ENCODE measurements at regions of chr3 and their contacts with region 1.

Region 1: GRCh38 chr3:156674046-156674910 is at the start of gene TIPARP:
- DNase-seq: peak; percentile 100
- ATAC-seq: peak; percentile 80
- H3K4me3 Mint-ChIP-seq: peak within 1 kb of the TSS; percentile 92
- H3K27ac Mint-ChIP-seq: peak within 1 kb of the TSS; percentile 97
- H3K4me1 Mint-ChIP-seq: peaks cover 42% of the 10 kb centered on the region
- H3K27me3 Mint-ChIP-seq: no peaks in the 10 kb centered on the region
- CTCF ChIP-seq: no peak
- total RNA-seq, gene TIPARP: 31.3 and 32.3 TPM in 2 replicates

Region 2: DNA sequence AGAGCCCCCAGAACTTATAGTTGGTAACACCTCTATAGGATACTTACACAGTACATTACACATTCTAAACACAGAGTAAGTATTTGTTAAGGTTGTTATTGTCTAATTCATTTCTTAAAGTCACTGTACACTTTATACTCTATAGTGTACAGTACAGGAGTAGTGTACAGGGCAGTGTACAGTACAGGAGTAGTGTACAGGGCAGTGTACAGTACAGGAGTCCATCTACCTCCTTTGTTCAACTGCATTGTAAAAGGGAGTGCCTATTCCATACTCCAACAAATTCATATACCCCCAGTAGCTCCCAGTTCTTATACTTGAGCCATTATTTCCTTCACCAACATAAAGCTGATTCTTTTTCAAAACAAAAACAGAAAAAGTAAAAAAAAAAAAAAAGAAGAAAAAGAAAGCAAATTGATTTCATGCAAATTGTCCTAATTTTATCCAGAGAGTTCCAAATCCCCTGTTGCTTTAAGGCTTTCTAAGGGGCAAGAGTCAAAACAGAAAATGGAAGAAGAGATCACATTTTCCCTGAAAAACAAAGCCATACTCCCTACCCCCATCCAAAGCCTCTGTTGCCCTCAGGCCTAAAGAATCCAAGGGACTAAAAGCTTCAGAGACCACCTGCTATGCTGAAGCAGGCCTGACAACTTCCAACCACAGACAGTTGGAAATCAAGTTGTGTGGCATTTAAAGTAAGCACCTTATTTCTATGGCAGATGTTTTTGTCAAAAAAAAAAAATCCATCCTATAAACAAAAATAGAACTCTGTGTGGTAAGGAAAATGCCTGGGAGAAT is 1055.0 kb before region 1 on chr3:
- CTCF ChIA-PET with region 1: no interaction called
- POLR2A ChIA-PET with region 1: no interaction called
- intact Hi-C with region 1: no loop called
- DNase-seq: no peak
- ATAC-seq: no peak
- H3K4me3 Mint-ChIP-seq: no peak overlapping the region
- H3K27ac Mint-ChIP-seq: no peak overlapping the region
- H3K4me1 Mint-ChIP-seq: no peaks in the 10 kb centered on the region
- H3K27me3 Mint-ChIP-seq: no peaks in the 10 kb centered on the region
- CTCF ChIP-seq: no peak

Region 3: GRCh38 chr3:155854141-155854940 is 819.9 kb before region 1 on chr3 and contains the start of gene SLC33A1:
- CTCF ChIA-PET with region 1: no interaction called
- POLR2A ChIA-PET with region 1: no interaction called
- intact Hi-C with region 1: loop called (anchors 2 kb)
- DNase-seq: peak; percentile 97
- ATAC-seq: peak; percentile 91
- H3K4me3 Mint-ChIP-seq: peak within 1 kb of the TSS; percentile 98
- H3K27ac Mint-ChIP-seq: peak within 1 kb of the TSS; percentile 98
- H3K4me1 Mint-ChIP-seq: peaks cover 41% of the 10 kb centered on the region
- H3K27me3 Mint-ChIP-seq: no peaks in the 10 kb centered on the region
- CTCF ChIP-seq: no peak
- total RNA-seq, gene SLC33A1: 19.8 and 23.3 TPM in 2 replicates

Region 4: DNA sequence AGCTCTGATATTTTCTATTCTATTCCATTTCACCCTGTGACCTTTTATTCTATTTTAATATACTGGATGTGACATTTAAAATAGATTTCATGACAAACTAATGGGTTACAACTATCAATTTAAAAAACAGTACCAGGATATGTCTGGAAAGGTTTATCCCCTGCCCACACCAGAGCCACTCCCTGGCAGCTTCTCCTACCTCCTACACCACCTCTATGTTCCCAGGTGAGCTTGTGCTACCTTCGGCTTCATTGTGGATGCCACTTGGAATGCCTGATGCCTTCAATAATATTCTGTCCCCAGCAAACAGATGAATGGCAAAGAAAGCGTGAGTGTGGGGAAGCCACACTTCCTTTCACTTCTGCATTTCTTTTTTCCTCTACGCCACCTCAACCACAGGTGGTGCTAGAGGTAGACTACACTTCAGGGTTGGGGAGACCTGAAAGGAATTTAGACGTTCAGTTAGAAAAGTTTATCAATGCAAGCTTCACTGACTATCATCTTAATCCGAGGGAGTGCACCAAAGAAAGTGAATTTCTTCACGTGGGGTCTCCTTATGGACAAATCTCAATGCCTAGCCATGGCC is 332.4 kb before region 1 on chr3:
- CTCF ChIA-PET with region 1: no interaction called
- POLR2A ChIA-PET with region 1: no interaction called
- intact Hi-C with region 1: loop called (anchors 10 kb)
- DNase-seq: no peak
- ATAC-seq: peak; percentile 94
- H3K4me3 Mint-ChIP-seq: no peak overlapping the region
- H3K27ac Mint-ChIP-seq: no peak overlapping the region
- H3K4me1 Mint-ChIP-seq: peaks cover 6% of the 10 kb centered on the region
- H3K27me3 Mint-ChIP-seq: peaks cover 32% of the 10 kb centered on the region
- CTCF ChIP-seq: no peak

Region 5: GRCh38 chr3:156649681-156650080 is 24.6 kb before region 1 on chr3:
- CTCF ChIA-PET with region 1: no interaction called
- POLR2A ChIA-PET with region 1: no interaction called
- intact Hi-C with region 1: no loop called
- DNase-seq: no peak
- ATAC-seq: no peak
- H3K4me3 Mint-ChIP-seq: no peak overlapping the region
- H3K27ac Mint-ChIP-seq: no peak overlapping the region
- H3K4me1 Mint-ChIP-seq: no peaks in the 10 kb centered on the region
- H3K27me3 Mint-ChIP-seq: peaks cover 3% of the 10 kb centered on the region
- CTCF ChIP-seq: no peak

Region 6: DNA sequence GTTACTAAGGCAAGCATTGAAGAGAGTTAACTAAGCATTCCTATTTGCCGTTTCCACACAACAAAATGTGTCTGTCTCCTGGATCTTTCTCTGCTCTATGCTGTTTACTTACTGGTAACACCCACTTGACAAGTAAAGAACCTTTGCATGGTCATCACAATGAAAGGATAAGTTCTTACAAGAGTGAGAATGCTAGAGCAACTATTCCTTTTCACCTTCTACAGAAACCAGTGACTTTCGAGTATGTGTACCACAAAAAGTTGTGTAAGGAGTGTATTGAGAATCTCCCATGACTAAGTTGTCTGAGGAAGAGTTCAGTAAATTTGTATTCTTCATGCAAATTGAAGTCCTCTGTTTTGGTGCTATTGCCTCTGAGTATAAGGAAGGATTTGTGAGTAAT is 10.9 kb after region 1 on chr3:
- CTCF ChIA-PET with region 1: interaction called, 4 read pairs
- POLR2A ChIA-PET with region 1: interaction called, 12 read pairs
- intact Hi-C with region 1: loop called (anchors 1 kb)
- DNase-seq: no peak
- ATAC-seq: no peak
- H3K4me3 Mint-ChIP-seq: no peak overlapping the region
- H3K27ac Mint-ChIP-seq: no peak overlapping the region
- H3K4me1 Mint-ChIP-seq: peaks cover 55% of the 10 kb centered on the region
- H3K27me3 Mint-ChIP-seq: no peaks in the 10 kb centered on the region
- CTCF ChIP-seq: no peak

Region 7: DNA sequence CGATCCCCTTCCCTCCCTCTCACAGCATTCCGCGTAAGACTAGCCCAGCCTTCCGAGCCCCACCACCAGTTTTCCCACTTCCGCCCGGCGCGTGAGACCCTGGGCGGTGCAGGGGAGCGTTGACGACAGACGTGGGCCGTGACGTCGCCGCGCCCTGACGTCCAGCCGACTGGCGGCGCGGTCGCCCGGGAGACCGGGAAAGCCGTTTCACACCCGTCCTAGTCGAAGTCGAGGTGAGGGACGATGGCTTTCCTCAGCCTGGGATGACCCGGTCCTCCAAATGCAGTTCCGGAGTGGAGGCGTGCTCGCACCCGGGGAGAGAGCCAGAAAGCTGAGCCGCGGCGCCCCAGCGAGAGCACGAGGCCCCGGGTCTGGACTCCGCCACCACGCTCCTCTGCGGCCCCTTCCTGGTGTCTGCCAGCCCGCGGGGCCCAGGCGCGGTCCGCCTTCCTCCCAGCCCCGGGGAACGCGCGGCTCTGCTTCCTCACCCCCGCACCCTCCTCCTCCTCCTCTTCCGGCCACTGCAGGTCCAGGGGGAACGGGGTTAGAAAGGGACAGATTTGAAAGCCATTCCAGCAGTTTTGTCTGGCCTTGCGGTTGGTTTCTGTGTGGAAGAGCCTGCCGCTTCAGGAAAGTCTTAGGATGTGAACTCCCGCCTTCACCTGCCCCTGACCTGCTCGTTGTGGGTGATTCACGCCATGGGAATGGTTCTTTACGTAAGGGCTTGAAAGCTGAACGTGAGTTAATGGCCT is 152.0 kb after region 1 on chr3 and contains the start of gene LEKR1:
- CTCF ChIA-PET with region 1: no interaction called
- POLR2A ChIA-PET with region 1: interaction called, 12 read pairs
- intact Hi-C with region 1: loop called (anchors 1 kb)
- DNase-seq: peak; percentile 74
- ATAC-seq: peak; percentile 73
- H3K4me3 Mint-ChIP-seq: peak within 1 kb of the TSS; percentile 90
- H3K27ac Mint-ChIP-seq: peak within 1 kb of the TSS; percentile 96
- H3K4me1 Mint-ChIP-seq: peaks cover 21% of the 10 kb centered on the region
- H3K27me3 Mint-ChIP-seq: no peaks in the 10 kb centered on the region
- CTCF ChIP-seq: no peak
- total RNA-seq, gene LEKR1: 2.8 and 2.9 TPM in 2 replicates

Region 8: GRCh38 chr3:157081681-157082210 is 407.5 kb after region 1 on chr3:
- CTCF ChIA-PET with region 1: interaction called, 42 read pairs
- POLR2A ChIA-PET with region 1: interaction called, 33 read pairs
- intact Hi-C with region 1: loop called (anchors 1 kb)
- DNase-seq: peak; percentile 86
- ATAC-seq: peak; percentile 99
- H3K4me3 Mint-ChIP-seq: no peak overlapping the region
- H3K27ac Mint-ChIP-seq: peak overlapping the region; percentile 63
- H3K4me1 Mint-ChIP-seq: peaks cover 10% of the 10 kb centered on the region
- H3K27me3 Mint-ChIP-seq: no peaks in the 10 kb centered on the region
- CTCF ChIP-seq: peak; percentile 88

Region 9: DNA sequence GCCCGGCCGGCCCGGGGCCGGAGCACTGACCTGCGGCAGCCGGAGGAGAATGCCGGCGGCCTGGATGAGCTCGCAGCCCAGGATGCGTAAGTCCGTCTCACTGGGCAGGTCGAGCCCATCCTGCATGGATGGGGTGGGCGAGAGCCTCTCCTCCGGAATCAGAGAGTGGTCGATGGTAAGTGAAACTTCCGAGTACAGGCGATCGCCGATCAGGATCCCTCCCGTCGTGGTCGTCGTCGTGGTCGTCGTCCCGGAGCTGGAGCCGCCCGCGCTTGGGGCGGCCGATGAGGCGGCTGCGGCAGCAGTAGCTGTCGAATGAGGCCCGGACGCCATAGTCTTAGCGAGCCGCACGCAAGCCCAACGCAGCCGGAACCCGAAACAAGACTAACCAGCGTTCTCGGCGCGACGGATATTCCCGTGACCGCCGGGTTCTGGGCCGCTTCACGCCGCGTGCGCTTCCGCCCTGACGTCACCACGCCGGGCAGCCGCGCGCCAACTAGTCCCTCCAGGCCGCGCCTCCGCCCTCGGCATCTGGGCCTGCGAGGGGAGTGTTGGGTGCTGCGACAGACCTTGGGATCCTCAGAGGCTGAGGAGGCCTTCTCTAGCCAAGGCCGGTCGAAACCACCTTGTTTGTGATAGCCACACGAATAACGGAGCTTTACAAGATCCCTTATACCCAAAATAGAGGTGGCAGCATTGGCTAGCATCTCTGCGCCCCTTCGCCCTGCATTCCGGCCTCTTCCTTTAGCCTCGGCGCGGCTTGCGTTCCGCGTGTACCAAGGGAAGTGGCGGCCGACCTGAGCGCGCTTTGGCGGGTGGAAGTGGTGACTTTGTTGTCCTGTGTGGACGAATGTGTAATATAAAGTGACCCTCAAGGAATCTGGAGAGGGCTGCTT is 485.7 kb after region 1 on chr3 and contains the start of gene CCNL1:
- CTCF ChIA-PET with region 1: no interaction called
- POLR2A ChIA-PET with region 1: interaction called, 28 read pairs
- intact Hi-C with region 1: loop called (anchors 1 kb)
- DNase-seq: peak; percentile 96
- ATAC-seq: peak; percentile 78
- H3K4me3 Mint-ChIP-seq: peak within 1 kb of the TSS; percentile 99
- H3K27ac Mint-ChIP-seq: peak within 1 kb of the TSS; percentile 98
- H3K4me1 Mint-ChIP-seq: peaks cover 59% of the 10 kb centered on the region
- H3K27me3 Mint-ChIP-seq: no peaks in the 10 kb centered on the region
- CTCF ChIP-seq: no peak
- total RNA-seq, gene CCNL1: 184 and 222 TPM in 2 replicates

Measured in activated B cell treated with CpG ODN at 0.5 μM for 24 hours (primary cell).